ENCODE measurements at regions of chr11 and their contacts with region 1.

Region 1: DNA sequence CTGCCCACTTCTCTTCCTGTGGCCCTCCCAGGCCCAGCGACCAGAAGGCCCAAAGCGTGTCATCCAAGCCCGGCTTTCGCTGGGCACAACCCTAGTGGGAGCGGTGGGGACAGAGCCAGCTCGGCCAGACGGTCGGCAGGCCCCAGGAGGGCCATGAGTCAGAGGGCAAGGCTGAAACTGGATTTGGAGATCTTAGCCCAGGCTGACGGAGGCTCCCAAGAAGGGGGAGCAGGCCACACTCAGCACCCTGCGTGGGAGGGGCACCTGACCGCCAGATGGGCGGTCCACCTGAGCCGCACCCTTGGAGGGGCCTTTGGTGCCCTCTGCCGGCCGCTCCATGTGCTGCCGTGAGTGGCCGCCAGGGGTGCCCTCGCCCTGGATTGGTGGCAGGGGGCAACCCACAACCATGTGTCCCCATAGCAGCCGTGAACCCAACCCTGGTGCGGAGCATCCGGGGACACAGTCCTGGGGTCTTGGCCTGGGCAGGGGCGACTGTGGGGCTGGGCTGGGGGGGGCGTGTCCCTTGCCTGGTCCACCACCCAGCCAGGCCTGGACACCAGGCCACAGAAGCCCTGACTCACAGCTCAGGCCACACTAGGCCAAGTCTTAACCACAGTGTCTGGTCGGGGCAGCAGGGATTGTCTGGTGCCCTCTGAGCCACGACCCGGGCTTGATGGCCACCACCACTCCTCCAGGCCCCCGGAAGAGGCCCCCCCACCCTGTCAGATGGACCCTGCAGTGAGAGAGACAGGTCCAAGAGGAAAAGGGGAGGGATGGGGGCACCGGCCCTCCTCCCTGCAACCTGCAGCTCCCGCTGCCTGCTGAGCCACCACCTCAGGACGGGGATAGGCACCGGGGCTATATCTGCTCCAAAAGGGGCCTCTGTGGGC is 19.2 kb upstream of the TALDO1 start:
- DNase-seq: peak; percentile 48 to 82
- ATAC-seq: peak; percentile 44 to 87
- H3K4me3 ChIP-seq: peak overlapping the region in 2 of 4 donors; percentile 7 to 31
- H3K27ac ChIP-seq: peak overlapping the region in 1 of 4 donors; percentile 14
- H3K4me1 ChIP-seq: peaks cover 0 to 19% of the 10 kb centered on the region in 2 donors
- H3K27me3 ChIP-seq: peaks cover 27 to 39% (median 35%) of the 10 kb centered on the region in 3 donors
- CTCF ChIP-seq: peak; percentile 96 to 99 (median 97)
- POLR2A ChIP-seq: no peak

Region 2: GRCh38 chr11:554824-555472 is 173.2 kb before region 1 on chr11:
- in situ Hi-C with region 1: loop called (anchors 25 kb)
- intact Hi-C with region 1: loop called (anchors 1 kb)
- DNase-seq: no peak
- ATAC-seq: peak; percentile 52 to 65
- H3K4me3 ChIP-seq: peak overlapping the region in 3 of 4 donors; percentile 5 to 43 (median 37)
- H3K27ac ChIP-seq: no peak overlapping the region
- H3K4me1 ChIP-seq: peaks cover 9% of the 10 kb centered on the region in 2 donors
- H3K27me3 ChIP-seq: peaks cover 50 to 56% (median 55%) of the 10 kb centered on the region in 3 donors
- CTCF ChIP-seq: peak; percentile 29 to 72 (median 63)
- POLR2A ChIP-seq: no peak

Region 3: GRCh38 chr11:662689-663274 is 65.3 kb before region 1 on chr11:
- in situ Hi-C with region 1: no loop called
- intact Hi-C with region 1: loop called (anchors 1 kb)
- DNase-seq: peak in 1 of 2 donors; percentile 48
- ATAC-seq: no peak
- H3K4me3 ChIP-seq: no peak overlapping the region
- H3K27ac ChIP-seq: no peak overlapping the region
- H3K4me1 ChIP-seq: peaks cover 9 to 13% of the 10 kb centered on the region in 2 donors
- H3K27me3 ChIP-seq: no peaks in the 10 kb centered on the region
- CTCF ChIP-seq: peak; percentile 26 to 81 (median 63)
- POLR2A ChIP-seq: no peak

Region 4: DNA sequence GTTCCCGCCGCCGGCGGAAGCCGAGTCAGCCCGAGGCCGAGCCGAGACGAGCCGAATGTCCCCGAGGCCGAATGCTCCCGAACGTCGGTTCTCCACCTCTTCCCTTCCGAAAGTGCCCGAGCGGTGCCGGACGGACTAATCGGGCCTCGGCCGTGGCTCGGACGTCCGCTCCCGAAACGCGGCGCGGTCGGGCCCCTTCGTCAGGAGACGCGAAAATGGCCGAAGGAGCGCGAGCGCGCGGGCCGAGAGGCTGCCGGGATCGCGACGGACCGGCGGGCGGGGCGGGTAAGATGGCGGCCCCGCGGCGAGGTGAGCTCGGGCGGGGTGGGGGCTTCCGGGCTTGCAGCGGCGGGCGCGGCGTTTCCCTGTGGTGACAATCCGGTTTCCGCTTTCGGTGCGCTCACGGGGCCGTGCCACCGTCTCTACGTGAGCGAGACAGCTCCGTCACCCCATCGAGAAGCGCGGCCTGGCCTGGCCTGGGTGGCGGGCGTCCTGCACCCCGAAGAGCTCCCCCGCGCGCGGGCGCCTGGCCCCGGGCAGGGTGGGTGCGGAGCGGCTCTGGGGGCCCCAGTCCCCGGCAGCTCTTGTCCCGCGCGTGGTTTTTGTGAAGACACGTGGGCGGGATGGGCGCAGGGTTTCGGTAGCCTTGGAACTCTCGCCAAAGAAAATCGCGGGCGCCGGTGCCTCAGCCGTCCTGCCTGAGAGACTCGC is 32.4 kb before region 1 on chr11 and contains the start of gene TMEM80:
- in situ Hi-C with region 1: no loop called
- intact Hi-C with region 1: loop called (anchors 2 kb)
- DNase-seq: peak; percentile 99
- ATAC-seq: peak; percentile 72 to 74
- H3K4me3 ChIP-seq: peak within 1 kb of the TSS; percentile 77 to 92 (median 89)
- H3K27ac ChIP-seq: peak within 1 kb of the TSS; percentile 92 to 100 (median 98)
- H3K4me1 ChIP-seq: peaks cover 33 to 35% of the 10 kb centered on the region in 2 donors
- H3K27me3 ChIP-seq: no peaks in the 10 kb centered on the region
- CTCF ChIP-seq: no peak
- POLR2A ChIP-seq: peak; percentile 69 to 72
- total RNA-seq, gene TMEM80: 3.2 to 22.3 (median 14.3) TPM

Region 5: GRCh38 chr11:798093-798713 is 70.1 kb after region 1 on chr11 and contains the start of gene SLC25A22:
- in situ Hi-C with region 1: no loop called
- intact Hi-C with region 1: loop called (anchors 1 kb)
- DNase-seq: peak in 1 of 2 donors; percentile 57
- ATAC-seq: peak; percentile 67 to 79
- H3K4me3 ChIP-seq: peak within 1 kb of the TSS; percentile 64 to 71 (median 68)
- H3K27ac ChIP-seq: peak within 1 kb of the TSS; percentile 57 to 69 (median 64)
- H3K4me1 ChIP-seq: peaks cover 11 to 35% of the 10 kb centered on the region in 2 donors
- H3K27me3 ChIP-seq: peaks cover 10 to 24% (median 23%) of the 10 kb centered on the region in 3 donors
- CTCF ChIP-seq: peak; percentile 73 to 97 (median 92)
- POLR2A ChIP-seq: no peak
- total RNA-seq, gene SLC25A22: 0.80 to 1.5 (median 1.0) TPM in 3 of 4 donors, not detected in the other

Region 6: DNA sequence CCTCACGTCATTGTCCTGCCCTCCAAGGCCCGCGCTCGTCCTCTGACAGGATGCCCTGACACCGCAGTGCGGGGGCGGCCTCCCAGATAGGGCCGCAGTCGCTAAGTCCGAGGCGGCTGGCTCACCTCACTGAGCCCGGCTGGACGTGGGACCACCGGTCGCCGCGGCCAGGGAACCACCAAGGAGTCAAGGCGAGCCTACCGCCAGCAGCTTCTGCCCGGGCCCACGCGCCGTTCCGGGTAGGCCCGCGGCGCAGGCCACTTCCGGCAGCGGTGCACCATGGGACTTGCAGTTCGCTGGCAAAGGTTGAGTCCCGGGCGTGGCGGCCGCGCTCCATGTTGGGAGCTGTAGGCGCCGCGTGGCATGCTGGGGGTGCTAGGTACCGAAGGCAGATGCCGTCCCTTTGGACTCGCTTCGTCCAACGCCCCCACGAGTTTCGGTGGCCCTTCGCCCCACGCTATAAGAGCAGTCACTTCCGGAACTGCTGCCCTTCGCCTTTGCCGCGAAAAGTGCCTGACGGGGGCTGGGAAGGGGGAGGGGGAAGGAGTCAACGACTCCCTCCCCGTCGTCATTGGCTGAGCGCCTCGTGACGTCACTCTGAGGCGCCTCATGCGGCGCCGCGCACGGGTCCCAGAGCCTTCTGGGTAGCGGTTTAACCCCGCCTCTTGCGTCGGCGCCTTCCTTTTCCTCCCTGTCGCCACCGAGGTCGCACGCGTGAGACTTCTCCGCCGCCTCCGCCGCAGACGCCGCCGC is 81.4 kb after region 1 on chr11 and contains the start of gene RPLP2:
- in situ Hi-C with region 1: no loop called
- intact Hi-C with region 1: no loop called
- DNase-seq: peak; percentile 97 to 98
- ATAC-seq: peak; percentile 83 to 85
- H3K4me3 ChIP-seq: peak within 1 kb of the TSS; percentile 66 to 97 (median 78)
- H3K27ac ChIP-seq: peak within 1 kb of the TSS; percentile 97 to 100 (median 100)
- H3K4me1 ChIP-seq: peaks cover 38 to 41% of the 10 kb centered on the region in 2 donors
- H3K27me3 ChIP-seq: no peaks in the 10 kb centered on the region
- CTCF ChIP-seq: peak in 1 of 5 experiments; percentile 10
- POLR2A ChIP-seq: peak; percentile 90 to 95
- total RNA-seq, gene RPLP2: 314 to 600 (median 440) TPM